Sigmoid colon (tissue), 7 donors: ENCODE measurements at regions of chr11 and their contacts with region 1.

Region 1: GRCh38 chr11:59615637-59616395 is at the start of gene OSBP:
- DNase-seq: peak; percentile 100
- H3K4me3 ChIP-seq: peak within 1 kb of the TSS; percentile 75 to 88 (median 86)
- H3K27ac ChIP-seq: peak within 1 kb of the TSS; percentile 92 to 97 (median 94)
- H3K4me1 ChIP-seq: peaks cover 0 to 43% (median 33%) of the 10 kb centered on the region in 4 donors
- H3K27me3 ChIP-seq: no peaks in the 10 kb centered on the region
- CTCF ChIP-seq: no peak
- EP300 ChIP-seq: no peak
- POLR2A ChIP-seq: peak in 1 of 2 donors; percentile 61
- total RNA-seq, gene OSBP: 27.5 to 41.5 (median 30.0) TPM

Region 2: GRCh38 chr11:59542142-59542810 is 73.5 kb before region 1 on chr11:
- intact Hi-C with region 1: loop called (anchors 1 kb)
- DNase-seq: no peak
- H3K4me3 ChIP-seq: no peak overlapping the region
- H3K27ac ChIP-seq: no peak overlapping the region
- H3K4me1 ChIP-seq: peaks cover 0 to 8% (median 6%) of the 10 kb centered on the region in 4 donors
- H3K27me3 ChIP-seq: no peaks in the 10 kb centered on the region
- CTCF ChIP-seq: no peak
- EP300 ChIP-seq: no peak
- POLR2A ChIP-seq: no peak

Region 3: DNA sequence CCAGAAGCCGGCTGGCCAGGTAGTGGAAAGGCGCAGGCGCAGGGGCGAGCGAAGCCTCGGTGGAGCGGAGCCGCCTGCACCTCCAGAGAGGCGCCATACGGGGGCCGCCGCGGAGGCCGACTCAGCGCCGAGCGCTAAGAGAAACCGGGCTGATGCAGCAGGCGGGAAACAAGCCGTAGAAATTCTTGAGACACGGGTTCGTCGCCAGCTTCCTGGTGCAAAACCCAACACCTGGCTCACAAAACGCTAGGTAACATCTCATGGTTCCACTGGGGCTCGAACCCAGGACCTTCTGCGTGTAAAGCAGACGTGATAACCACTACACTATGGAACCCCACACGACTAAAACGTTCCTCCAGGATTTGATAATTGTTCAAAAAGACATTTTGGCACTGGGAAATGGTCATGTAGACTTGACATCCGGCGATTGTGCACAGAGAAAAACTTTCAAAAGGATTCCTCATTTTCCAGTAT is 65.4 kb before region 1 on chr11:
- intact Hi-C with region 1: loop called (anchors 5 kb)
- DNase-seq: peak; percentile 91
- H3K4me3 ChIP-seq: peak overlapping the region; percentile 46 to 55 (median 52)
- H3K27ac ChIP-seq: peak overlapping the region; percentile 80 to 87 (median 82)
- H3K4me1 ChIP-seq: peaks cover 0 to 13% (median 3%) of the 10 kb centered on the region in 4 donors
- H3K27me3 ChIP-seq: no peaks in the 10 kb centered on the region
- CTCF ChIP-seq: peak; percentile 46 to 76 (median 54)
- EP300 ChIP-seq: no peak
- POLR2A ChIP-seq: no peak

Region 4: GRCh38 chr11:59574932-59575502 is 40.8 kb before region 1 on chr11:
- intact Hi-C with region 1: loop called (anchors 5 kb)
- DNase-seq: no peak
- H3K4me3 ChIP-seq: no peak overlapping the region
- H3K27ac ChIP-seq: peak overlapping the region in 3 of 4 donors; percentile 59 to 72 (median 63)
- H3K4me1 ChIP-seq: peaks cover 0 to 22% (median 13%) of the 10 kb centered on the region in 4 donors
- H3K27me3 ChIP-seq: no peaks in the 10 kb centered on the region
- CTCF ChIP-seq: no peak
- EP300 ChIP-seq: no peak
- POLR2A ChIP-seq: no peak